IMR-90 (cell line): ENCODE measurements at regions of chr10 and their contacts with region 1.

Region 1: GRCh38 chr10:95793401-95794045 is 37.6 kb downstream of the ENTPD1 start:
- DNase-seq: no peak
- ATAC-seq: no peak
- H3K4me3 ChIP-seq: no peak overlapping the region
- H3K27ac ChIP-seq: peak overlapping the region; percentile 64; the same call in 1 of the 2 replicates
- H3K4me1 ChIP-seq: peaks cover 3% of the 10 kb centered on the region; the same call in 1 of the 2 replicates
- H3K27me3 ChIP-seq: no peaks in the 10 kb centered on the region
- CTCF ChIP-seq: no peak
- POLR2A ChIP-seq: no peak
- RAD21 ChIP-seq: no peak

Region 2: DNA sequence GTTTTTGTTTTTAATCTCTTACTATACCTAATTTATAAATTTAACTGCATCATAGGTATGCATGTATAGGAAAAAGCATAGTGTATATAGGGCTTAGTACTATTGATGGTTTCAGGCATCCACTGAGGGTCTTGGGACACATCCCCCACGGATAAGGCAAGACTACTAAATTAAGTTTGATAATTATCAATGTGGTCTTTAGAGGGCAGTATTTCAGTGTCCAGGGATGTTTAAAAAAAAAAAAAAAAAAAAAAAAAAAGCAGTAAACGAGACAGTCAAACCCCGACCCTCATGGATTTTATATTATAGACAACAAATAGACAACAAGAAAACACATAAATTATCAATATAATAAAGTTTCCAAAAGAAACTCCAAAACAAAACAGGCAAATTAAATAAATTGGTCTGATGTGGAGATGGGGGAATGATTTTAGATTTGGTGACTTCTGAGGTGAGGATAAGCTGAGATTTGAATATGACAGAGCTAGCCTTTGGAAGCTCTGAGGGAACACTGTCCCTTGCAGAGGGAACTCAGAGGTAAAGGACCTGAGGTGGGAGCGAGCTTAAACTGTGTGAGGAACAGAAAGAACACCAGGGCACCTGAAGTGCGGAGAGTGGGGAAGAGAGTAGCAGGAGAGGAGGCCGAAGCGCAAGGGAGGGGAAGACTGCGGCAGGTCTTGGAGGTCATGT is 584.7 kb before region 1 on chr10:
- CTCF ChIA-PET with region 1: no interaction called
- POLR2A ChIA-PET with region 1: no interaction called
- dilution Hi-C with region 1: no loop called
- in situ Hi-C with region 1: no loop called
- intact Hi-C with region 1: no loop called
- DNase-seq: no peak
- ATAC-seq: peak; percentile 59; the same call in 1 of the 2 replicates
- H3K4me3 ChIP-seq: no peak overlapping the region
- H3K27ac ChIP-seq: no peak overlapping the region
- H3K4me1 ChIP-seq: peaks cover 3% of the 10 kb centered on the region; the same call in 1 of the 2 replicates
- H3K27me3 ChIP-seq: no peaks in the 10 kb centered on the region
- CTCF ChIP-seq: peak; percentile 55
- POLR2A ChIP-seq: no peak
- RAD21 ChIP-seq: peak; percentile 47

Region 3: GRCh38 chr10:95716466-95717224 is 76.9 kb before region 1 on chr10:
- CTCF ChIA-PET with region 1: no interaction called
- POLR2A ChIA-PET with region 1: interaction called, 10 read pairs
- dilution Hi-C with region 1: no loop called
- in situ Hi-C with region 1: no loop called
- intact Hi-C with region 1: no loop called
- DNase-seq: no peak
- ATAC-seq: peak; percentile 82
- H3K4me3 ChIP-seq: no peak overlapping the region
- H3K27ac ChIP-seq: no peak overlapping the region
- H3K4me1 ChIP-seq: peaks cover 2% of the 10 kb centered on the region; the same call in 1 of the 2 replicates
- H3K27me3 ChIP-seq: no peaks in the 10 kb centered on the region
- CTCF ChIP-seq: no peak
- POLR2A ChIP-seq: no peak
- RAD21 ChIP-seq: no peak

Region 4: GRCh38 chr10:95818668-95819067 is 25.1 kb after region 1 on chr10:
- CTCF ChIA-PET with region 1: no interaction called
- POLR2A ChIA-PET with region 1: no interaction called
- dilution Hi-C with region 1: no loop called
- in situ Hi-C with region 1: no loop called
- intact Hi-C with region 1: loop called (anchors 1 kb)
- DNase-seq: peak; percentile 82
- ATAC-seq: peak; percentile 78
- H3K4me3 ChIP-seq: no peak overlapping the region
- H3K27ac ChIP-seq: peak overlapping the region; percentile 50; the same call in 1 of the 2 replicates
- H3K4me1 ChIP-seq: peaks cover 16% of the 10 kb centered on the region
- H3K27me3 ChIP-seq: no peaks in the 10 kb centered on the region
- CTCF ChIP-seq: no peak
- POLR2A ChIP-seq: no peak
- RAD21 ChIP-seq: no peak